Stomach (tissue), 19 donors: ENCODE measurements at regions of chr6 and their contacts with region 1.

Region 1: GRCh38 chr6:34154668-34155447 is 9.0 kb upstream of the GRM4 start:
- DNase-seq: peak; percentile 57 to 81
- H3K4me3 ChIP-seq: peak overlapping the region in 3 of 4 donors; percentile 8 to 44 (median 18)
- H3K27ac ChIP-seq: no peak overlapping the region
- H3K4me1 ChIP-seq: peaks cover 6 to 11% (median 9%) of the 10 kb centered on the region in 4 donors
- H3K27me3 ChIP-seq: peaks cover 5 to 66% (median 54%) of the 10 kb centered on the region in 3 donors
- CTCF ChIP-seq: peak in 5 of 7 experiments; percentile 83 to 98 (median 93)
- EP300 ChIP-seq: no peak
- POLR2A ChIP-seq: no peak

Region 2: GRCh38 chr6:33771146-33772081 is 383.4 kb before region 1 on chr6:
- intact Hi-C with region 1: loop called (anchors 10 kb)
- DNase-seq: peak; percentile 77 to 93
- H3K4me3 ChIP-seq: peak overlapping the region in 1 of 4 donors; percentile 14
- H3K27ac ChIP-seq: peak overlapping the region; percentile 1 to 90 (median 79)
- H3K4me1 ChIP-seq: peaks cover 23 to 50% (median 39%) of the 10 kb centered on the region in 4 donors
- H3K27me3 ChIP-seq: no peaks in the 10 kb centered on the region
- CTCF ChIP-seq: peak in 5 of 7 experiments; percentile 77 to 98 (median 96)
- EP300 ChIP-seq: no peak
- POLR2A ChIP-seq: no peak

Region 3: DNA sequence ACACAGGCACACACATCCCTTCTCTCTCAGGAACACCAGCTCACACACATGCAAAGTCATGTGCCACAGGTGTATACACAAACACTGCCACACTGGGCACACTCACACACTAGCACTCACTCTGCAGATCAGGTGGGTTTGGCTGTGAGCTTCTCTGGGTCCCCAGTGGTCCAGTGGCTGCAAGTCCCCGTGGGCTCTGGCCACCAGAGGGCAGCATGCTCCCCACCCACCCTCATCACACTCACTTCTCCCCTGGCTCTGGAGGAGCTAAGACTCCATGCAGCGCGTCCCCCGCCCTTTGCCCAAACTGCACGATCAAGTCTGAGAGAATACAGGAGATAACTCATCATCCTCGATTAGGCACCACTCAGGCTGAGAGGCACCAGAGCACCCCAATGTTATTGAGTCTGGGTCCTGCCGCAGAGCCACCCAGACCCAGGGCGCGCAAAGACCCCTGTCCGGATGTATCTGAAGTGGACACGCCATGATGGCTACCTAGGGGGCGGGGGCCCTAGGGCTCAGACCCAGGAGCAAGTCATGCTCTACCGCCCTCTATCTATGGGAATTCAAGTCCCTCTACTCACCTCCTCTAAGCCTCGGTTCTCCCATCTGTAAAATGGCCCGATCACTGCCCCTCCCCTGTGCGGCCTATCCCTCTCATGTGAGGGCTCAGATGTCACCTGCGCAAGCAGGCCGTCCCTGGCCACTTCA is 99.5 kb before region 1 on chr6:
- intact Hi-C with region 1: loop called (anchors 5 kb)
- DNase-seq: peak; percentile 62 to 87
- H3K4me3 ChIP-seq: no peak overlapping the region
- H3K27ac ChIP-seq: no peak overlapping the region
- H3K4me1 ChIP-seq: peaks cover 0 to 19% (median 9%) of the 10 kb centered on the region in 4 donors
- H3K27me3 ChIP-seq: peaks cover 0 to 36% (median 0%) of the 10 kb centered on the region in 3 donors
- CTCF ChIP-seq: peak in 5 of 7 experiments; percentile 43 to 73 (median 70)
- EP300 ChIP-seq: no peak
- POLR2A ChIP-seq: no peak

Region 4: GRCh38 chr6:34067814-34068213 is 87.0 kb before region 1 on chr6:
- intact Hi-C with region 1: no loop called
- DNase-seq: no peak
- H3K4me3 ChIP-seq: no peak overlapping the region
- H3K27ac ChIP-seq: no peak overlapping the region
- H3K4me1 ChIP-seq: peaks cover 0 to 6% (median 0%) of the 10 kb centered on the region in 4 donors
- H3K27me3 ChIP-seq: peaks cover 0 to 74% (median 41%) of the 10 kb centered on the region in 3 donors
- CTCF ChIP-seq: no peak
- EP300 ChIP-seq: no peak
- POLR2A ChIP-seq: no peak

Region 5: DNA sequence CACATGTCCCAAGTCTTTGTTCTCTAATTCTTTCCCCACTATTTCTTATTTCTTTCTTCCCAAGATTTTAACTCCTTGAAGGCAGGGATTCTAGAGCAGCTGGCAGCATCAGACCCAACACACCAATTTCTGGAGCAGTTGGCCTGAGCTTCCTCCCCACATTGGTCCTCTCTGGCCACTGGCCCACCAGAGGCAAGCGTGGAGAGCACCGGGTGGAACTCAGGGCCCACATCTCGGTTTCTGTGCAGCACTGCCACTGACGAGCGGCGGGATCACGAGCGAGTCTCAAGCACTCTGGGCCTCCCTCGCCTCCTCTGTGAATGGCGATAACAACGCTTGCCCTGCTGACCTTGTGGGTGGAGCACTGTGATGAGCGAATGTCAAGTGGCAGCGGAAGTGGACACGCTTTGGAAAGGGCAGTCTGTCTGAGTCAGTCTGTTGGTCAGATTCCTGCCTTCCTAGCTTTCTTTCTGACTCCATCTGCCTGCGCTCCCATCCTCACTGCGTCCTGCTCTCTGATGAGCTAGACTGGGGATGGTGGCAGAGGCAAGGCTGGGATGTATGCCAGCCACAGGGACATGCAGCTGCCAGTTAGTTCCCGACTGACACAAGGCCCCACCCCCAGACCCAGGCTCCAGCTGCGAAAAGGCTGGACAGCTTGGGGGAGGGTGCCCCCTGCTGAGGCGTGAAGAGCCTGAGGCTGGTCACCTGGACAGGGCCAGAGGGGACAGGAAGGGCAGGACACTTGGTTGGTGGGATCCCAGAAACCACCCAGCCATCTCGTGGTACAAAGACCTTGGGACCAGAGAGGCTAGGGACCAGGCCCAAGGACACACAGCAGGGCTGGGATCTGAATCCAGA is 405.7 kb after region 1 on chr6:
- intact Hi-C with region 1: no loop called
- DNase-seq: peak; percentile 66 to 78
- H3K4me3 ChIP-seq: no peak overlapping the region
- H3K27ac ChIP-seq: peak overlapping the region in 2 of 5 donors; percentile 25 to 46
- H3K4me1 ChIP-seq: peaks cover 21 to 67% (median 44%) of the 10 kb centered on the region in 4 donors
- H3K27me3 ChIP-seq: peaks cover 0 to 4% (median 0%) of the 10 kb centered on the region in 3 donors
- CTCF ChIP-seq: peak in 1 of 7 experiments; percentile 24
- EP300 ChIP-seq: no peak
- POLR2A ChIP-seq: no peak